ENCODE measurements at regions of chrX and their contacts with region 1.

Region 1: GRCh38 chrX:9464435-9465371 is at the start of gene TBL1X:
- DNase-seq: peak; percentile 40 to 63
- ATAC-seq: peak; percentile 32 to 57 (median 37)
- H3K4me3 ChIP-seq: peak within 1 kb of the TSS; percentile 73
- H3K4me3 Mint-ChIP-seq: peak within 1 kb of the TSS; percentile 88
- H3K27ac ChIP-seq: peak within 1 kb of the TSS; percentile 71
- H3K27ac Mint-ChIP-seq: peak within 1 kb of the TSS; percentile 94
- H3K4me1 ChIP-seq: peaks cover 41% of the 10 kb centered on the region
- H3K4me1 Mint-ChIP-seq: peaks cover 34 to 40% of the 10 kb centered on the region in 2 donors
- H3K27me3 ChIP-seq: no peaks in the 10 kb centered on the region
- H3K27me3 Mint-ChIP-seq: peaks cover 0 to 8% of the 10 kb centered on the region in 2 donors
- CTCF ChIP-seq: no peak
- total RNA-seq, gene TBL1X: 21.9 to 43.8 (median 32.7) TPM

Region 2: GRCh38 chrX:9207142-9207541 is 257.6 kb before region 1 on chrX:
- intact Hi-C with region 1: loop called (anchors 2 kb)
- DNase-seq: no peak
- ATAC-seq: no peak
- H3K4me3 ChIP-seq: no peak overlapping the region
- H3K4me3 Mint-ChIP-seq: peak overlapping the region; percentile 82
- H3K27ac ChIP-seq: no peak overlapping the region
- H3K27ac Mint-ChIP-seq: peak overlapping the region in 1 of 2 donors; percentile 89
- H3K4me1 ChIP-seq: peaks cover 22% of the 10 kb centered on the region
- H3K4me1 Mint-ChIP-seq: peaks cover 29 to 41% of the 10 kb centered on the region in 2 donors
- H3K27me3 ChIP-seq: no peaks in the 10 kb centered on the region
- H3K27me3 Mint-ChIP-seq: no peaks in the 10 kb centered on the region
- CTCF ChIP-seq: no peak

Region 3: DNA sequence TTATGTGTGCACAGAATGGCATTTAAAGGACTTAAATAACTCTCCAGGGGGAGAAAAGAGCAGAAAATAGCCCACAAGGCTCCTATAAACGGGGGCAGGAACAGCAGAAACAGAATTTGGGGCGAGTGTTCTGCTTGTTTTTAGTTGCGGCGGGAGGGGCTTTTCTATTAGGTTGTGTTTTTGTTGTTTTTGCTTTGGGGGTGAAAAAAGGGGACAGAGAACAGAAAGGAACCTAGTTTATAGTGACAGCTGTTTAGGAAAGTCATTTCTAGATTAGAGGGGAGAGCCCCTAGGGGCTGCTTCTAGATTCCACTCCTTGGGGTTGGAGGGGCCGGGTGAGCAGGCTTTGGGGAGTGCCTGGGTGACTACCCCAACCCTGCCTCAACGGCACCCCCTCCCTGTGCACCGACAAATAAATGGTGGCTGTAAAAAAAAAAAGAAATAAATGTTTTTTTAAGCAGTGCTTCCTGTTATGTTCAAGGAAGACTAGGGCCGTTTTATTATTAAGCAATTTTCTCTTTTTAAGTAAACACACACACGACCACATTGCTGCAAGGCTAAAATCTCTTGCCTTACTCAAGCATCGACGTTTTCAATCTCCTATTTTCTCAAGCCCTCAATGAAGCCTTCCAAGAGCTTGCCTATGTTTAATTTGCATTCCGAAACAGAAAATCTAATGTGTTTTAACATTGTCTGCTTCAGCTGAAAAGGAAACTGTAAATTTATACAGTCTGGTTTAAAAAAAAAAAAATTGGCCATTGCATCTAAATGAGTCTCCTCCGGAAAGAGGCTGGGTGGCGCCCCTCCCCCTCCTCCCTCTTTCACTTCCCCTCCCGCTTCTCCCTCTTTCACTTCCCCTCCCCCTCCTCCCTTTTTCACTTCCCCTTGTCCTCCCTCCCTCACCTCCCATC is 123.2 kb before region 1 on chrX:
- intact Hi-C with region 1: loop called (anchors 1 kb)
- DNase-seq: peak; percentile 35 to 80
- ATAC-seq: peak; percentile 43 to 72 (median 56)
- H3K4me3 ChIP-seq: peak overlapping the region; percentile 28
- H3K4me3 Mint-ChIP-seq: peak overlapping the region; percentile 92
- H3K27ac ChIP-seq: peak overlapping the region; percentile 89
- H3K27ac Mint-ChIP-seq: peak overlapping the region; percentile 98
- H3K4me1 ChIP-seq: peaks cover 33% of the 10 kb centered on the region
- H3K4me1 Mint-ChIP-seq: peaks cover 34 to 39% of the 10 kb centered on the region in 2 donors
- H3K27me3 ChIP-seq: no peaks in the 10 kb centered on the region
- H3K27me3 Mint-ChIP-seq: no peaks in the 10 kb centered on the region
- CTCF ChIP-seq: no peak

Region 4: DNA sequence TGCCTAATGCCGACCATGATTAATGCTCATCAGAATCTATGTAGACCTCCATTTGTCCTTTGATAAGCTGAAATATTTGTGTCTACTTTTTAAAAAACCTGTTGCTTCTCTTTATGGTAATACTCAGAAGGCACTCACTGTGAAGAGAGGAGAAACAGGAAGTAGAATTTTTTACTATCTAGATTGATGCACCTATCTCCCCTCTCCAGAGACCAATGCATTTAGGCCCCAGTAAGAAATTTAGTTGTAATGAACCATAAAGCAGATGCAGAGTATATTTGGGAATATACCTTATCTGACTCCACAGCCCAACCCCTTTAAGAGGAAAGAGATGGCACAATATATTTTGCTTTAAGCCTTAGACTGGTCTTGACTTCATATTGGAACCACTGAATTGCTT is 11.3 kb after region 1 on chrX:
- intact Hi-C with region 1: loop called (anchors 1 kb)
- DNase-seq: no peak
- ATAC-seq: peak in 2 of 3 donors; percentile 24 to 38
- H3K4me3 ChIP-seq: no peak overlapping the region
- H3K4me3 Mint-ChIP-seq: peak overlapping the region; percentile 8
- H3K27ac ChIP-seq: peak overlapping the region; percentile 52
- H3K27ac Mint-ChIP-seq: peak overlapping the region; percentile 81 to 89
- H3K4me1 ChIP-seq: peaks cover 11% of the 10 kb centered on the region
- H3K4me1 Mint-ChIP-seq: peaks cover 36 to 44% of the 10 kb centered on the region in 2 donors
- H3K27me3 ChIP-seq: no peaks in the 10 kb centered on the region
- H3K27me3 Mint-ChIP-seq: no peaks in the 10 kb centered on the region
- CTCF ChIP-seq: no peak

Region 5: GRCh38 chrX:9644335-9644734 is 179.6 kb after region 1 on chrX:
- intact Hi-C with region 1: loop called (anchors 5 kb)
- DNase-seq: peak; percentile 47 to 75
- ATAC-seq: peak; percentile 87 to 93 (median 90)
- H3K4me3 ChIP-seq: no peak overlapping the region
- H3K4me3 Mint-ChIP-seq: peak overlapping the region; percentile 50
- H3K27ac ChIP-seq: no peak overlapping the region
- H3K27ac Mint-ChIP-seq: peak overlapping the region; percentile 80 to 84
- H3K4me1 ChIP-seq: peaks cover 33% of the 10 kb centered on the region
- H3K4me1 Mint-ChIP-seq: peaks cover 31 to 38% of the 10 kb centered on the region in 2 donors
- H3K27me3 ChIP-seq: no peaks in the 10 kb centered on the region
- H3K27me3 Mint-ChIP-seq: no peaks in the 10 kb centered on the region
- CTCF ChIP-seq: no peak

Region 6: DNA sequence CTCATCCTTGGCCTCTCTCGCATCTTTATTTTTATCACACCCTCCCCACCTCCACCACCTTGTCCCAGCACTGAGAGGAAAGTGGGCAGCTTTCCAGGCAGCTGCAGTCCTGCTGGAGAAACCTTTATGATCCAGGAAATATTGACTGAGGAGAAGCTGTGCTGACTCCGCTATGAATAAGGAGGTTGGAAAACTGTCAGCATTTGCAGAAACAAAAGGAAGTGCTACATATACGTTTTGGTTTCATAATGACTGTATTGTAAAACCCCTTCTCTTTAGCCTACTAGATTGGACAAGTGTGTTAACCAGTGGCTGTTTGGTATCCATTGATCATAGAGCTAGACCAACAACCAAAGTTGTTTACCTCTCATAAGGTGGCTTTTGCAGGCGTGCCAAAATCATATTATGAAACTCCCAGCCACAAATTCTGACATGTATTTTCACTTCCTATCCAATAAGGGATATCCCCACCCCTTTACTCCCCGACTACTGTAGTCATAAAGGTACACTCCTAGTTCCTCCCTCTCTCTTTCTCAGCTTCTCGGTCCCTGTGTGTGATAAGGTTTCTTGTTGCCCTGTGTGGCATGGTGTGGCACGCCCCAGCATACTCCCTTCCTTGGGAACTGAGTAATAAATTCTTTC is 212.5 kb after region 1 on chrX:
- intact Hi-C with region 1: loop called (anchors 1 kb)
- DNase-seq: peak in 1 of 2 donors; percentile 49
- ATAC-seq: peak; percentile 88 to 95 (median 94)
- H3K4me3 ChIP-seq: no peak overlapping the region
- H3K4me3 Mint-ChIP-seq: peak overlapping the region; percentile 54
- H3K27ac ChIP-seq: peak overlapping the region; percentile 73
- H3K27ac Mint-ChIP-seq: peak overlapping the region; percentile 79 to 91
- H3K4me1 ChIP-seq: peaks cover 16% of the 10 kb centered on the region
- H3K4me1 Mint-ChIP-seq: peaks cover 37 to 42% of the 10 kb centered on the region in 2 donors
- H3K27me3 ChIP-seq: no peaks in the 10 kb centered on the region
- H3K27me3 Mint-ChIP-seq: no peaks in the 10 kb centered on the region
- CTCF ChIP-seq: no peak

Region 7: GRCh38 chrX:9847071-9847470 is 382.4 kb after region 1 on chrX:
- intact Hi-C with region 1: no loop called
- DNase-seq: no peak
- ATAC-seq: no peak
- H3K4me3 ChIP-seq: no peak overlapping the region
- H3K4me3 Mint-ChIP-seq: no peak overlapping the region
- H3K27ac ChIP-seq: no peak overlapping the region
- H3K27ac Mint-ChIP-seq: no peak overlapping the region
- H3K4me1 ChIP-seq: peaks cover 6% of the 10 kb centered on the region
- H3K4me1 Mint-ChIP-seq: no peaks in the 10 kb centered on the region
- H3K27me3 ChIP-seq: no peaks in the 10 kb centered on the region
- H3K27me3 Mint-ChIP-seq: peaks cover 0 to 3% of the 10 kb centered on the region in 2 donors
- CTCF ChIP-seq: no peak